Endothelial cell of umbilical vein (primary cell): ENCODE measurements at regions of chr1 and their contacts with region 1.

Region 1: DNA sequence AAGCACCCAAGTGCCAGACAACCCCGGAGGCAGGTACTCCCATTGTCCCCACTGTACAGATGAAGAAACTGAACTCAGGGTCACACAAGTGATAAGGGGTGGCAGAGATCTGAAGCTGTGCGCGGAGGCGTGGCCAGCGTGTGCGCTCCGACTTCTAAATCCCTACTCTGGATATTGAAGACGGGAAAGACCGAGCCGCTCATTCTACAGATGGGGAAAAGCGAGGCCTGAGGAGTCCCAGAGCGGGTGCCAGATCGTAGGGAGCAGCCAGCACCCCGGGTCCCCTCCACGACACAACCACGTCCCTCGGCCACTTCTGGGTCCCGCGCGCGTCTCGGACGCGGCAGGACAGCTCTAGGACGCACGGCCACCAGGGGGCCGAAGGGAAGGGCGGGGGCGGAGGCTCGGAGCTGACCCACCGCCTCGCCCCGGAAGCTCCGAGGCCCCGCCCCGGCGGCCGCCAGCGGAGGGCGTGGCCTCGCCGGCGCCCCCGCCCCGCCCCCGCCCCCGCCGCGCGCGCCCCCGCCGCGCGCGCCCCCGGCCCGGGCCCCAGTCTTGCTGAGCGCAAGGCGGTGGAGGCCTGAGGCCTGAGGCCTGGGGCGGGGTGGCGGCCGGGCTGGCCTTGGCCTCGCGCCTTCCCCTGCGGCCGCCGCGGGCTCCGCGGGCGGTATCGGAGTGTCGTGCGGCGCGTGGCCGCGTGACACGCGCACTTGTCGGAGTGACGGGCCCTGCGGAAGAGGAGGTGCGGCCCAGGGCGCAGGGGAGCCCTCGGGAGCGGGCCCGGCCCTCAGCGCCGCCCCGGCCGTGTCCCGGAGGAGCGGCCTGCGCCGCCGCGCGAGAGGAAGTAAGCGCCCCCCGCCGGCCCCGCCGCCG is at the start of gene H6PD:
- DNase-seq: peak; percentile 74
- H3K4me3 ChIP-seq: peak within 1 kb of the TSS; percentile 58 to 82 (median 66)
- H3K27ac ChIP-seq: peak within 1 kb of the TSS; percentile 75
- H3K4me1 ChIP-seq: peaks cover 21% of the 10 kb centered on the region
- H3K27me3 ChIP-seq: no peaks in the 10 kb centered on the region
- CTCF ChIP-seq: peak; percentile 68 to 76
- POLR2A ChIP-seq: peak; percentile 96
- total RNA-seq, gene H6PD: 29.0 and 40.1 TPM in 2 replicates

Region 2: GRCh38 chr1:9181176-9181906 is 53.1 kb before region 1 on chr1:
- CTCF ChIA-PET with region 1: interaction called, 8 read pairs
- POLR2A ChIA-PET with region 1: no interaction called
- dilution Hi-C with region 1: no loop called
- intact Hi-C with region 1: loop called (anchors 1 kb)
- DNase-seq: peak; percentile 74
- H3K4me3 ChIP-seq: peak overlapping the region; percentile 66 to 79 (median 76)
- H3K27ac ChIP-seq: peak overlapping the region; percentile 69
- H3K4me1 ChIP-seq: peaks cover 22% of the 10 kb centered on the region
- H3K27me3 ChIP-seq: no peaks in the 10 kb centered on the region
- CTCF ChIP-seq: peak; percentile 98 to 99
- POLR2A ChIP-seq: no peak

Region 3: DNA sequence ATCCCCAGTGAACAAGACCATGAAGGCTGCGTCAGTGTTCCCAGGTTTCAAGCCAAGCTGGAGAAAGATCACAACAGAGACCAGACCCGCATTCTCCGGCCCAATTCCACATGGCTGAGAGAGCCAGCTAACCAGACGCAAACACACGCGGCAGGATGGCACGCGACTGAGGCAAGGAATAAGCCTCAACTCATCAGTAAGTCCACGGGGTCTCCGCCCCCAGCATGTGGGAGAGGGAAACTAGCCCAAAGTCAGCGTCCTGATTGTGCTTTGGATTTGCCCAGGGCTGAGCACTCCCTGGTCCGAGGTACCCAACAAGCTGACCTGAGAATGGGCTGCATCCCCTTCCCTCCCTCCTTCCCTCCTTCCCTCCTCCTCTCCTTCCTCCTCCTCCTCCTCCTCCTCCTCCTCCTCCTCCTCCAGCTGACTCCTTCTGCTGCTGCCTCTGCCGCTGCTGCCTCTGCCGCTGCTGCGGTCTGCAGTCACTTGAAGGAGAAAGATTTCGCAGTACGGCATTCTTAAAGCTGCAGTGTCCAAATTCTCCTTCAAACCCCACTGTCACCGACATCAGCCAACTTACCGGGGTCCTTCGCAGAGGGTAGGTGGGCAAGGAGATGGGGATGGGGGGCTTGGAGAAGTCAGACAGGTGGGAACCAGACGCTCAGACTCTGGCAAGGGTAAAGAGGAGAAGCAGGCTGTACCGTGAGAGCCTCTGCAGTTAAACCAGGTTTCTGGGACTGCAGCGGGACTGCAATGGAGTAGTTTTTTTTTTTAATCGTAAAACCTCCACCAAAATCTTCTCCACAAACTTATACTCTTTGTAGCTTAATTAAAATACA is 32.8 kb before region 1 on chr1:
- CTCF ChIA-PET with region 1: interaction called, 29 read pairs
- POLR2A ChIA-PET with region 1: no interaction called
- dilution Hi-C with region 1: no loop called
- intact Hi-C with region 1: loop called (anchors 5 kb)
- DNase-seq: peak; percentile 48
- H3K4me3 ChIP-seq: peak overlapping the region; percentile 32 to 60 (median 54)
- H3K27ac ChIP-seq: no peak overlapping the region
- H3K4me1 ChIP-seq: peaks cover 16% of the 10 kb centered on the region
- H3K27me3 ChIP-seq: peaks cover 21 to 23% of the 10 kb centered on the region in 2 experiments
- CTCF ChIP-seq: no peak
- POLR2A ChIP-seq: no peak

Region 4: DNA sequence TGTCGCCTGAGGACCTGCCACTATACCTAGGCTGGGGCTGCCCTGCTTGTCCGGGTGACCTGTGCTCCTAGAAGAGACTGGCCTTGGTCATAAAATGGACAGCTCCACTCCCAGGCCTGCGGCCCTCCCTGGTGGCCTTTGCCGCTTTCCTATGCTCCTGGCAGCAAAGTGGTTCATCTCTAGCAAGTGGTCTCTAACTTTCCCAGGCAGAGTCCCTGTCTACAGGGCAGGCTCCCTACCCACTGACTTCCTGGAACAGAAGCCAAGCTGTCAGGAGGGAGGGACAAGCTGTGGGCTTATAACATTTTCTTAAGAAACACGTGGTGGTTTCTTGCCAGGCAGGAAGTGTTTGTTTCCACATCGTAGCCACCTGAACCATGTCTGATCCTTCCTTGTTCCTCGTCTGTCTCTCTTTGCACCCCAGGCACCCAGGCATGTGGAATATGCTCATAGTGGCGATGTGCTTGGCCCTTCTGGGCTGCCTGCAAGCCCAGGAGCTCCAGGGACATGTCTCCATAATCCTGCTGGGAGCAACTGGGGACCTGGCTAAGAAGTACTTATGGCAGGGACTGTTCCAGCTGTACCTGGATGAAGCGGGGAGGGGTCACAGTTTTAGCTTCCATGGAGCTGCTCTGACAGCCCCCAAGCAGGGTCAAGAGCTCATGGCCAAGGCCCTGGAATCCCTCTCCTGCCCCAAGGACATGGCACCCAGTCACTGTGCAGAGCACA is 10.2 kb after region 1 on chr1:
- CTCF ChIA-PET with region 1: interaction called, 27 read pairs
- POLR2A ChIA-PET with region 1: no interaction called
- dilution Hi-C with region 1: no loop called
- intact Hi-C with region 1: no loop called
- DNase-seq: no peak
- H3K4me3 ChIP-seq: no peak overlapping the region
- H3K27ac ChIP-seq: no peak overlapping the region
- H3K4me1 ChIP-seq: peaks cover 16% of the 10 kb centered on the region
- H3K27me3 ChIP-seq: no peaks in the 10 kb centered on the region
- CTCF ChIP-seq: no peak
- POLR2A ChIP-seq: no peak

Region 5: GRCh38 chr1:9494929-9495758 is 260.7 kb after region 1 on chr1:
- CTCF ChIA-PET with region 1: interaction called, 12 read pairs
- POLR2A ChIA-PET with region 1: no interaction called
- dilution Hi-C with region 1: no loop called
- intact Hi-C with region 1: no loop called
- DNase-seq: peak; percentile 42
- H3K4me3 ChIP-seq: peak overlapping the region in 2 of 3 experiments; percentile 15 to 22
- H3K27ac ChIP-seq: no peak overlapping the region
- H3K4me1 ChIP-seq: no peaks in the 10 kb centered on the region
- H3K27me3 ChIP-seq: peaks cover 0 to 4% of the 10 kb centered on the region in 2 experiments
- CTCF ChIP-seq: peak; percentile 92 to 97
- POLR2A ChIP-seq: no peak